Activated naive CD4-positive, alpha-beta T cell treated with anti-CD3 and anti-CD28 coated beads, Interleukin-2, amount 10 ng/mL, durations not matched to agents 7 days and 5 days (primary cell): ENCODE measurements at regions of chr7 and their contacts with region 1.

Region 1: DNA sequence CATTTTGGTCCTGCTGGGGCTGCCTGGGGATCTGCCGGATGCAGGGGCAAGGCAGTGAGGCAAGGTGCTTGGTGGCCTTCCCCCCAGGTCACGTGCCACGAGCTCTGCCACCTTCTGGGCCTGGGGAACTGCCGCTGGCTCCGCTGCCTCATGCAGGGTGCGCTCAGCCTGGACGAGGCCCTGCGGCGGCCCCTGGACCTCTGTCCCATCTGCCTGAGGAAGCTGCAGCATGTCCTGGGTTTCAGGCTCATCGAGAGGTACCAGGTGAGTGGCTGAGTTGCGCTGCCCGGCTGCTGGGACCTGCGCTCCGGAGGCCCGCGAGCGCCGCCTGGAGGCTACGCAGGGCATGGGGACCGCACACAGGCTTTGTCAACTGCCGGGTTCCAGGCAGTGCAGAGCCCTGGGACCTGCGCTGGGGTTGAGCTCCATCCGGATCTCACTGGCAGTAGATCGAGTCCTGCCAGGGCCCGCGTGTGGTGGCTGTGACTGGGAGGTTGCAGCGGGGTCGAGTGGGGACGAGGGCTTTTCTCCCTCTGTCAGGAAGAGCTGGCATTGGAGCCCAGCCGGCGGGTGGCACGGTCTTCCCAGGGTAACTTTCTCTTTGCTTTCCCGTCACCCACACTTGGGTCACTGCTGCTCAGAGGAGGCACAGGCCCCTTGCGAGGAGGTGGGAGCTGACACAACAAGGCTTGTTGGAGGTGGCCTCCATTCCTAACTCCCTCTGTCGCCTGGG is 21.7 kb downstream of the AMZ1 start:
- DNase-seq: peak; percentile 87
- H3K4me3 Mint-ChIP-seq: peak overlapping the region; percentile 37
- H3K27ac Mint-ChIP-seq: peak overlapping the region; percentile 65
- H3K4me1 Mint-ChIP-seq: peaks cover 45% of the 10 kb centered on the region
- H3K27me3 Mint-ChIP-seq: peaks cover 83% of the 10 kb centered on the region

Region 2: GRCh38 chr7:2477447-2478398 is 232.0 kb before region 1 on chr7:
- CTCF ChIA-PET with region 1: interaction called, 10 read pairs
- DNase-seq: peak; percentile 79
- H3K4me3 Mint-ChIP-seq: no peak overlapping the region
- H3K27ac Mint-ChIP-seq: no peak overlapping the region
- H3K4me1 Mint-ChIP-seq: peaks cover 10% of the 10 kb centered on the region
- H3K27me3 Mint-ChIP-seq: peaks cover 43% of the 10 kb centered on the region

Region 3: DNA sequence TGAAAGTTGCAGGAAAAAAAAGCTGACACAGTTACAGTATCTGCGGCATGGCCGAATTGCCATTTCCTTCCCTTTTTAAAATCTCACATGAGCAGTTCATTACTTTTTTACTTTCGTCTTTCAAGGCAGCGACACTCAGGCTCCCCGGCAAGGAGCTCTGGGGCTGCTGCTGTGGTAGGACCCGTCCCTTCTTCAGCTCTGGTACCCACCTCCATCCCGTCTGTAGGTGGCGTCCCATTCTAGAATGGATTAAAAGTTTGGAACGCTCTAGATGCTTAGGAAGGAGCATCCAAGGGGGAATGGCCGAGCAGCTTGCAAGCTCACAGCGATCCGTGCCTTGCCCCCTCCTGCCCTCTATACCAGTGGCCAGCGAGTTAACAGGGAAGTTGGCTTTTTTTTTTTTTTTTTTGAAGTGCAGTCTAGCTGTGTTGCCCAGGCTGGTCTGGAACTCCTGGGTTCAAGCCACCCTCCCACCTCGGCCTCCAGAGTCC is 100.8 kb before region 1 on chr7:
- CTCF ChIA-PET with region 1: interaction called, 13 read pairs
- DNase-seq: peak; percentile 57
- H3K4me3 Mint-ChIP-seq: no peak overlapping the region
- H3K27ac Mint-ChIP-seq: no peak overlapping the region
- H3K4me1 Mint-ChIP-seq: peaks cover 13% of the 10 kb centered on the region
- H3K27me3 Mint-ChIP-seq: peaks cover 19% of the 10 kb centered on the region

Region 4: GRCh38 chr7:2645274-2645868 is 64.3 kb before region 1 on chr7:
- CTCF ChIA-PET with region 1: interaction called, 13 read pairs
- DNase-seq: peak; percentile 61
- H3K4me3 Mint-ChIP-seq: peak overlapping the region; percentile 23
- H3K27ac Mint-ChIP-seq: peak overlapping the region; percentile 66
- H3K4me1 Mint-ChIP-seq: peaks cover 16% of the 10 kb centered on the region
- H3K27me3 Mint-ChIP-seq: no peaks in the 10 kb centered on the region

Region 5: DNA sequence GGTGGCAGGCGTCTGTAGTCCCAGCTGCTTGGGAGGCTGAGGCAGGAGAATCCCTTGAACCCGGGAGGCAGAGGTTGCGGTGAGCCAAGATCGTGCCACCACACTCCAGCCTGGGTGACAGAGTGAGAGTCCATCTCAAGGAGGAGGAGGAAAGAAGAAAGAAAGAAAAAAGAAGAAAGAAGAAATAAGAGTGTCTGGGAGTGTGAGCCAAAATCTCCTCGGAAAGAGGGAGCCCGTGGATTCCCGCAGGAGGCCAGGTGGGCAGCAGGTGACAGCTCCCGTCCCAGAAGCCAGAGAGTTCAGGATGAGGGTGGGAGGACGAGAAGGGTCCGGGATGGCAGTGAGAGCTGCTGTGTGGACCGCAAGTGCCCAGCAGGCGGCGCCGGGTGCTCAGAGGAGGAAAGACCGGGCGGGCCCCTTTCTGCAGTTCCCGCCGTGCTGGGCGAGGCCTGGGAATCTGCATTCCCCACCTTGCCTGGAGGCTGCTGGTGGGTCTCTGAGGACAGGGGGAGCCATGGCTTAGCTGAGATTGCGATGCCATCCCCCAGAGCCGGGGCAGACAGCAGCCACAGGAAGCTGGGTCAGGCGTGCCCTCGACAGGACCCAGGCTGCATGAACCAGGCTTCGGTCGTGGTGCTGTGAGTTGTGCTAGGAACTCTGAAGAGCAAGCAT is 38.9 kb before region 1 on chr7:
- CTCF ChIA-PET with region 1: interaction called, 222 read pairs
- DNase-seq: peak; percentile 77
- H3K4me3 Mint-ChIP-seq: no peak overlapping the region
- H3K27ac Mint-ChIP-seq: no peak overlapping the region
- H3K4me1 Mint-ChIP-seq: peaks cover 11% of the 10 kb centered on the region
- H3K27me3 Mint-ChIP-seq: peaks cover 79% of the 10 kb centered on the region

Region 6: DNA sequence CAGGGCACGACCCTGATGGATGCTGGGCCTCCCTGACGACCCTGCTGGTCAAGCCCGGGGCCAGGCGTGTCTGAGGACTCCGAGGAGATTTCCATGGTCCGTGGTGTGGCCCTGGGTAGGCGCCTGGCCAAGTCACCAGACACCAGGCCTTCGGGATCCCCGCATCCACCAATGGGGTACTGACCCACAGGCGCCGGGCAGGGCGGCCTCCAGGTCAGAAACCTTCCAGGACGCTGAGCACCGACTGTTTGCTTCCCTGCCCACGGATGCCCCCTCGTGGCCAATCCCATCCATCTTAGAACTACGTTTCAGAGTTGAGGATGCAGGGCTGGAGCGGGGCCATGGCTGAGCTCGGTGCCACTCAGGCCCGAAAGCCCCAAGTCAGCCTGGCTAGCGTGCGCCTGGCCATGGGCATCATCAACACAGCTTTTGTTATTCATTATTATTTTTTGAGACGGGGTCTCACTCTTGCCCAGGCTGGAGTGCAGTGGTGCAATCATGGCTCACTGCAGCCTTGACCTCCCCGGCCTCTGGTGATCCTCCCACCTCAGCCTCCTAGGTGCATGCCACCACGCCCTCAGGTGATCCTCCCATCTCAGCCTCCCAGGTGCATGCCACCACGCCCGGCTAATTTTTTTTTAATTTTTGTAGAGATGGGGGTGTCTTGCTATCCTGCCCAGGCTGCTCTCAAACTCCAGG is 28.8 kb before region 1 on chr7:
- CTCF ChIA-PET with region 1: interaction called, 42 read pairs
- DNase-seq: peak; percentile 70
- H3K4me3 Mint-ChIP-seq: no peak overlapping the region
- H3K27ac Mint-ChIP-seq: no peak overlapping the region
- H3K4me1 Mint-ChIP-seq: no peaks in the 10 kb centered on the region
- H3K27me3 Mint-ChIP-seq: peaks cover 57% of the 10 kb centered on the region

Region 7: DNA sequence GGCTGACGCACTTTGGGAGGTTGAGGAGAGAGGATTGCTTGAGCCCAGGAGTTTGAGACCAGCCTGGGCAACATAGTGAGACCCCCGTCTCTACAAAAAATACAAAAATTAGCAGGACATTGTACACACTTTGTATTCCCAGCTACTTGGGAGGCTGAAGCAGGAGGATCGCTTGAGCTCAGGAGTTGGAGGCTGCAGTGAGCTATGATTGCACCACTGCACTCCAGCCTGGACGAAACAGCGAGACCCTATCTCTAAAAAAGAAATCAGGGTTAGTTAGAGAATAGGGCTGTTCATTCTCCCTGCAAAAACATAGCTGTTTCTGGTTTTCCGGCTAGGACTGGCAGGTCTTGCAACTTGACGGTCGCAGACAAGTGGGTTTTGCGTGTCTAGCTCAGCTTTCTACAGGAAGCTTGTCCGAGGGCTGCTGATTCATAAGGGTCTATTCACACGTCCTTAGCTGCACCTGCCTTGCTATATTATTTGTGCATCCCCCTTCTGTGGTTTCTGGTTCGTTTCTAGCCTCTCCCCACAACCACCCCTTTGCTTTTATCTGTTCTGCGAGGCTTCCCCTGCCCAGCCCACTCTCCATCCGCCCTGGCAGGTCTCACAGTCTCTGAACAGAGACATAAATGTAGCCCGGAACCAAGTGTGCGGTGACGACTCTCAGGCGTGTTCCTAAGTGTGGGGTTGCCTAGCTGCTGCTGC is 11.0 kb before region 1 on chr7:
- CTCF ChIA-PET with region 1: interaction called, 89 read pairs
- DNase-seq: peak; percentile 84
- H3K4me3 Mint-ChIP-seq: peak overlapping the region; percentile 57
- H3K27ac Mint-ChIP-seq: peak overlapping the region; percentile 87
- H3K4me1 Mint-ChIP-seq: peaks cover 35% of the 10 kb centered on the region
- H3K27me3 Mint-ChIP-seq: peaks cover 62% of the 10 kb centered on the region